ENCODE measurements at regions of chr7 and their contacts with region 1.

Region 1: GRCh38 chr7:54839538-54840213 is 80.7 kb upstream of the SEC61G start:
- DNase-seq: peak; percentile 85 to 90
- ATAC-seq: peak; percentile 82
- H3K4me3 ChIP-seq: no peak overlapping the region
- H3K27ac ChIP-seq: no peak overlapping the region
- H3K4me1 ChIP-seq: peaks cover 4 to 5% of the 10 kb centered on the region in 2 donors
- H3K27me3 ChIP-seq: no peaks in the 10 kb centered on the region

Region 2: DNA sequence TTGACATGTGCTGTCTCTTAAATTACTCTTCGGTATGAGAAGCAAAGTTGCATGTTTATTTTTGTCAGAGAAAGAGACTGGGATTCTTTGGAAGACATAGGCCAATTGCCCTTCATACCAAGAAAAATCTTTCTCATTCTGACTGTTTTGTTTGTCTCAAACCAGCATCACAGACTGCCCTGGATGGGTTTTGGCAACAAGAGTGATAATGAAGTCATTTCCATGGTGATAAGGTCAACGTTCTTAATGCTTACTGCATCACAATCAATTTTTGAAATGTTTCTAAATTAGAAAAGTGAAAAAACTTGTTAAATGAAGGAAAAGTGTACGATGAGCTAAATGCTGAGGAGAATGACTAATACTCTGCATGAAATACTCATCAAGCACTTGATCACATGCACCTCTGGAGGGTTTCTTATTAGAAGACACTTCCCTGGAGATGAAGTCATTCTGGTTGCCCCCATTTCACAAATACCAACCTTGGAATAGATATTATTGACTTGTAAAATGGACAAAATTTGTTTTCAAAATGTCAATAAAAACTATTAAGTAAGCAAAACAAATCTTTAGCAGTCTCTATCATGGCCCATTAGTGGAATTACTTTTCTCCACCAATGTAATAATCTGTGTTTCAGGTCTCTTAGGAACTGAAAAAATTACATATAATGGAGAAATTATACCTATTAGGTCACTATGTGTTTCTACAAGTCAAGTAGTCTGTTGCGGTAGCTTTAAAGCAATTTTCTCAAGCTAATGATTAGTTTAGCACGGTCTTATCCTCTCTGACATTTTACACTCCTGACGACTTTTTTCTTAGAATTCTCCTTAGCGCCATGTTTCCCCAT is 60.8 kb before region 1 on chr7:
- intact Hi-C with region 1: loop called in 1 of 2 experiments (anchors 5 kb)
- DNase-seq: no peak
- ATAC-seq: no peak
- H3K4me3 ChIP-seq: no peak overlapping the region
- H3K27ac ChIP-seq: no peak overlapping the region
- H3K4me1 ChIP-seq: no peaks in the 10 kb centered on the region
- H3K27me3 ChIP-seq: no peaks in the 10 kb centered on the region

Region 3: DNA sequence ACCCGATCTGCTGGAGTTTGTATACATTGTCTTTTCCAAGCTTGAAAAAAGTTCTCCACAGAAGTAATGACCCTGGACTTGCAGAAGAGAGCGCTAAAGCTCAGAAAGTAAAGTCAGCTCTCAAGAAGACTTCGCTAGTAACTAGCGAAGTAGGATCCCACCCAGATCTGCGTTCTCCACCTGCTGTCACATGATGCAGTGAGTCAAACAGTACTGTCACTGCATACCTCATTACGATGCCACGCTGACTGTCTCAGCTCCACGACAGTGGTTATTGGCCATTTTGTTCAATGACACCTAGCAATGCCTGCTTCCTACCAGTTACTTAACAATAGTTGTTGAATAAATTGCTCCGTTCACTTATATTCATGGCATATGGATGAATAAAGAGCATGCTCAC is 51.0 kb before region 1 on chr7:
- intact Hi-C with region 1: loop called (anchors 2 to 5 kb)
- DNase-seq: no peak
- ATAC-seq: peak; percentile 66
- H3K4me3 ChIP-seq: no peak overlapping the region
- H3K27ac ChIP-seq: no peak overlapping the region
- H3K4me1 ChIP-seq: no peaks in the 10 kb centered on the region
- H3K27me3 ChIP-seq: no peaks in the 10 kb centered on the region

Region 4: DNA sequence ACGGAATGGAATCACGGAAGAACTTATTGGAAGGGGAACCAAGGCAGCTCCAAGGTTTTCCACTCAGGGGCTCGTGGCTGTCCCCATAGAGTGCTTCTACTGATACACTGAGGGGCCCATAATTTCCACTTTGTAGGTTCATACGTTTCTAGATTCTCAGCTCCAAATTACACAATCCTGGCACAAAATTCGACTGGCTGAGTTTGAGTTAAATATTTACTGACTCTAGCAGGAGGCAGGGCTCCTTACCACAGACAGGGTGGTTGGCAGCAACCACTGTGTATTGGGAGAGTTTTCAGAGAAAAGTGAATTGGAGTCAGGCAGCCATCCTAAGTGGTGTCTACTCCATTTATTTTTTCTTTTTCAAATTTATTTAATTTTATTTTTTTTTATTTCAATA is 25.3 kb before region 1 on chr7:
- intact Hi-C with region 1: no loop called
- DNase-seq: no peak
- ATAC-seq: no peak
- H3K4me3 ChIP-seq: no peak overlapping the region
- H3K27ac ChIP-seq: no peak overlapping the region
- H3K4me1 ChIP-seq: peaks cover 0 to 3% of the 10 kb centered on the region in 2 donors
- H3K27me3 ChIP-seq: no peaks in the 10 kb centered on the region

Region 5: GRCh38 chr7:55044791-55045190 is 205.1 kb after region 1 on chr7:
- intact Hi-C with region 1: no loop called
- DNase-seq: no peak
- ATAC-seq: peak; percentile 56
- H3K4me3 ChIP-seq: no peak overlapping the region
- H3K27ac ChIP-seq: peak overlapping the region in 1 of 2 donors; percentile 85
- H3K4me1 ChIP-seq: peaks cover 0 to 4% of the 10 kb centered on the region in 2 donors
- H3K27me3 ChIP-seq: no peaks in the 10 kb centered on the region